Activated B cell treated with CpG ODN at 0.5 μM for 24 hours (primary cell): ENCODE measurements at regions of chr1 and their contacts with region 1.

Region 1: GRCh38 chr1:58249737-58250586 is 296.6 kb downstream of the OMA1 start:
- DNase-seq: no peak
- ATAC-seq: peak; percentile 18
- H3K4me3 Mint-ChIP-seq: peak overlapping the region; percentile 32
- H3K27ac Mint-ChIP-seq: no peak overlapping the region
- H3K4me1 Mint-ChIP-seq: peaks cover 4% of the 10 kb centered on the region
- H3K27me3 Mint-ChIP-seq: peaks cover 31% of the 10 kb centered on the region
- CTCF ChIP-seq: no peak

Region 2: DNA sequence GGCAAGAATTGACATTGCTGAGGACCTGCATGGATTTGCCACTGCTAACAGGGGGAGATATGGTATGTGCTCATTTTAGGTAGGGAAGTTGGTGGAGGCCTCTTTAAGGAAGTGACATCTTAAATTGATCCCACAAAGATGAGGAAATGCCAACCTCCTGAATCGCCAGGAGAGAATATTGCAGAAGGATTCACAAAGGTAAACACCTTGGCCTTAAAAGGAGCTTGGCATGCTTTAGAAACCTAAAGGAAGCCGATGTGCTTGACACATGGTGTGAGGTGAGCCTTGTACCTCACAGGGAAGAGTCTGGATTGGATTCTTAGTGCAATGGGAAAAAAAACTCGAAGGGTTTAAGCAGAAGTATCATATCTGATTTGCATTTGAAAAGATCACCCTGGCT is 355.6 kb before region 1 on chr1:
- CTCF ChIA-PET with region 1: no interaction called
- POLR2A ChIA-PET with region 1: no interaction called
- intact Hi-C with region 1: no loop called
- DNase-seq: no peak
- ATAC-seq: no peak
- H3K4me3 Mint-ChIP-seq: no peak overlapping the region
- H3K27ac Mint-ChIP-seq: no peak overlapping the region
- H3K4me1 Mint-ChIP-seq: no peaks in the 10 kb centered on the region
- H3K27me3 Mint-ChIP-seq: peaks cover 6% of the 10 kb centered on the region
- CTCF ChIP-seq: no peak

Region 3: GRCh38 chr1:58432851-58433668 is 183.1 kb after region 1 on chr1:
- CTCF ChIA-PET with region 1: no interaction called
- POLR2A ChIA-PET with region 1: no interaction called
- intact Hi-C with region 1: loop called (anchors 10 kb)
- DNase-seq: no peak
- ATAC-seq: peak; percentile 71
- H3K4me3 Mint-ChIP-seq: no peak overlapping the region
- H3K27ac Mint-ChIP-seq: no peak overlapping the region
- H3K4me1 Mint-ChIP-seq: no peaks in the 10 kb centered on the region
- H3K27me3 Mint-ChIP-seq: no peaks in the 10 kb centered on the region
- CTCF ChIP-seq: no peak